ENCODE measurements at regions of chr15 and their contacts with region 1.

Region 1: DNA sequence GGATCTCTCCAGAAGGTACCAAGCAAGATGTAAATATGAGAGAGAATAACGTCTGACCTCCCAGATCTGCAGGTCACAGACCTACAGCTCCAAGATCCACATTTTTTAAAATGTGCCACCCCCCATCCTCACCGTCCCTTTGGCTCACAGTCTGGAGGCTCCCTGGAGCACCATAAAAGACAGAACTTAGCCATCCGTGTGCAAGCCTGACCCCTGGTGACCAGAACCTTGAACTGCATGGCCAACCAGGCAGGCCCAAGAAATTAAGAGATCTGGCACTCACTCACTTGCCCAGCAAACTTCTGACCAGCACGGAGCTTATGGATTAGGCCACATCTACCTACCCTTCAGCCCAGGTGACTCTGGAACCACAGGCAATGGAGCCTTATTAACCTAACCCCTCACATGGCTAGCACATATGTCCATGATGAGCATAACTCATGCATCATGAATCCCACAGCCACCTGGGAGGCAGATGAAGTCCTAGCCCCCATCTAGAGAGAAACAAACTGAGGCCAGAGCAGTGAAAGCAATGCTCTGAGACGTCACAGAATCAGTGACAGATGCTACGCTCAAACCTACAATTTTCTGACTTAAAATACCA is 275.3 kb downstream of the UACA start:
- DNase-seq: peak; percentile 84
- H3K4me3 Mint-ChIP-seq: no peak overlapping the region
- H3K27ac Mint-ChIP-seq: no peak overlapping the region
- H3K4me1 Mint-ChIP-seq: peaks cover 42% of the 10 kb centered on the region
- H3K27me3 Mint-ChIP-seq: peaks cover 2% of the 10 kb centered on the region

Region 2: GRCh38 chr15:69576035-69576526 is 912.0 kb before region 1 on chr15:
- CTCF ChIA-PET with region 1: interaction called, 3 read pairs
- intact Hi-C with region 1: loop called (anchors 5 kb)
- DNase-seq: peak; percentile 82
- H3K4me3 Mint-ChIP-seq: no peak overlapping the region
- H3K27ac Mint-ChIP-seq: peak overlapping the region; percentile 17
- H3K4me1 Mint-ChIP-seq: peaks cover 30% of the 10 kb centered on the region
- H3K27me3 Mint-ChIP-seq: no peaks in the 10 kb centered on the region

Region 3: GRCh38 chr15:70140543-70141375 is 347.3 kb before region 1 on chr15:
- CTCF ChIA-PET with region 1: no interaction called
- intact Hi-C with region 1: loop called (anchors 5 kb)
- DNase-seq: peak; percentile 78
- H3K4me3 Mint-ChIP-seq: no peak overlapping the region
- H3K27ac Mint-ChIP-seq: peak overlapping the region; percentile 32
- H3K4me1 Mint-ChIP-seq: peaks cover 34% of the 10 kb centered on the region
- H3K27me3 Mint-ChIP-seq: peaks cover 3% of the 10 kb centered on the region

Region 4: DNA sequence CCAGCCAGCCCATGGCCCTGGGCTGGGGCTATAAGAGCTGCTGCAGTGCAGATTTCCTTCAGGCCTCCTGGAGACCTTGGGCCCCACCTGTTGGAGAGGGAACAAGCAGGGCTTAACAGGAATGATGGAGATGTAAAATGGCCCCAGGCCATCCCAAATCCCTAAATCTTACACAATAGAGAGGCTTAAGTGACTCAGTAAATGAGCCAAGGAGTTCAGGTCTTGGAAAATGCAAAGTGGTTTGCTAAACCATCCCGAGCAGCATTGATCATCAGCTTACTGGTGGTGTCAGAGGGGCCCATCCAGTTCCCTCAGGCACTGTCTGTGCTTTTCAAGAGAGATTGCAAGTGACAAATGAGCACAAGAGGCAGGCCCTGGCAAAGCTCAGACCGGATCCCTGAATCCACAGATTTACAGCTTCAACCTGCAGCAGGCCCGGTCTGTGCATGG is 50.2 kb before region 1 on chr15:
- CTCF ChIA-PET with region 1: no interaction called
- intact Hi-C with region 1: no loop called
- DNase-seq: no peak
- H3K4me3 Mint-ChIP-seq: no peak overlapping the region
- H3K27ac Mint-ChIP-seq: no peak overlapping the region
- H3K4me1 Mint-ChIP-seq: peaks cover 27% of the 10 kb centered on the region
- H3K27me3 Mint-ChIP-seq: peaks cover 4% of the 10 kb centered on the region

Region 5: DNA sequence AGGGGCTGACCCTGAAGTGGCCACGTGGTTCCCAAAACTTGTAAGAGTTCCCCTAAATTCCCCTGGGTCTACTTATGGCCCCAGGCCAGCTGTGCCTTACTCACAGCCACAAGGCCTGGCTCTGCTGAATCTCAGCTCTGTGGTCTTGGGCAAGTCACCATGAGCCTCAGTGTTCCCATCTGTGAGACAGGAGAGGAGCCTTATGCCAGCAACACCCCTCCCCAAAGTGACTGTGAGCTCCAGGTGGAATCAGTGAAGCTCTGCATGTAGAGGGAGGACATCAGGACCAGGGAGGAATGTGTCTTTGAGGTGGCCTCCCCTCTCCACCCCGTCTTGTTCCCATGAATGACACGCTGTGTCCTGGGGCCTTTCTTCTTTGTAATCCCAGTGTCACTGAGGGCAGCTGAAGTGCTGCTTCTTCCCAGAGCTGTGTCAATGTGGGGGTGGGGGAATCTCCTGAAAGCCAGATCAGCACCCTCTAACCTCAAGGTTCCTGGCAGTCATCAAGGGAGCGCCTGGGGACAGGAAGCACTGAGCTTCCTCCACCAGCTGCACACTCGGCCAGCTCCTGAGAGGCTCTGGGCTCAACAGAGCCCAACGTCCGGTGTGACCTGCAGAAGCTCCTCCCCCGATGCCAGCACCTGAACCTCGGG is 16.3 kb after region 1 on chr15:
- CTCF ChIA-PET with region 1: interaction called, 120 read pairs
- intact Hi-C with region 1: loop called (anchors 1 kb)
- DNase-seq: peak; percentile 81
- H3K4me3 Mint-ChIP-seq: peak overlapping the region; percentile 27
- H3K27ac Mint-ChIP-seq: peak overlapping the region; percentile 79
- H3K4me1 Mint-ChIP-seq: peaks cover 85% of the 10 kb centered on the region
- H3K27me3 Mint-ChIP-seq: no peaks in the 10 kb centered on the region

Region 6: GRCh38 chr15:70535071-70535954 is 47.2 kb after region 1 on chr15:
- CTCF ChIA-PET with region 1: interaction called, 4 read pairs
- intact Hi-C with region 1: loop called (anchors 1 kb)
- DNase-seq: peak; percentile 83
- H3K4me3 Mint-ChIP-seq: peak overlapping the region; percentile 89
- H3K27ac Mint-ChIP-seq: peak overlapping the region; percentile 92
- H3K4me1 Mint-ChIP-seq: peaks cover 51% of the 10 kb centered on the region
- H3K27me3 Mint-ChIP-seq: no peaks in the 10 kb centered on the region

Region 7: GRCh38 chr15:70875001-70875782 is 387.1 kb after region 1 on chr15:
- CTCF ChIA-PET with region 1: no interaction called
- intact Hi-C with region 1: no loop called
- DNase-seq: no peak
- H3K4me3 Mint-ChIP-seq: no peak overlapping the region
- H3K27ac Mint-ChIP-seq: no peak overlapping the region
- H3K4me1 Mint-ChIP-seq: no peaks in the 10 kb centered on the region
- H3K27me3 Mint-ChIP-seq: peaks cover 36% of the 10 kb centered on the region

Measured in activated naive CD4-positive, alpha-beta T cell treated with anti-CD3 and anti-CD28 coated beads for 36 hours (primary cell).